GM12878 (cell line): ENCODE measurements at regions of chr1 and their contacts with region 1.

Region 1: GRCh38 chr1:32005522-32005921 is 8.1 kb upstream of the KHDRBS1 start:
- DNase-seq: peak; percentile 43
- ATAC-seq: peak; percentile 88
- H3K4me3 ChIP-seq: no peak overlapping the region
- H3K27ac ChIP-seq: no peak overlapping the region
- H3K4me1 ChIP-seq: peaks cover 25% of the 10 kb centered on the region
- H3K27me3 ChIP-seq: no peaks in the 10 kb centered on the region
- CTCF ChIP-seq: no peak
- EP300 ChIP-seq: no peak
- POLR2A ChIP-seq: no peak
- RAD21 ChIP-seq: no peak

Region 2: GRCh38 chr1:31723828-31724359 is 281.6 kb before region 1 on chr1:
- CTCF ChIA-PET with region 1: no interaction called
- POLR2A ChIA-PET with region 1: no interaction called
- RAD21 ChIA-PET with region 1: no interaction called
- SMC1A ChIA-PET with region 1: no interaction called
- in situ Hi-C with region 1: no loop called
- intact Hi-C with region 1: no loop called
- DNase-seq: no peak
- ATAC-seq: 0 out of 3 replicates have a peak, but pooled peaks have one; percentile 28
- H3K4me3 ChIP-seq: no peak overlapping the region
- H3K27ac ChIP-seq: no peak overlapping the region
- H3K4me1 ChIP-seq: no peaks in the 10 kb centered on the region
- H3K27me3 ChIP-seq: peaks cover 0 to 3% of the 10 kb centered on the region in 2 experiments; a peak in 2 of 4 replicates
- CTCF ChIP-seq: no peak
- EP300 ChIP-seq: no peak
- POLR2A ChIP-seq: no peak
- RAD21 ChIP-seq: no peak

Region 3: DNA sequence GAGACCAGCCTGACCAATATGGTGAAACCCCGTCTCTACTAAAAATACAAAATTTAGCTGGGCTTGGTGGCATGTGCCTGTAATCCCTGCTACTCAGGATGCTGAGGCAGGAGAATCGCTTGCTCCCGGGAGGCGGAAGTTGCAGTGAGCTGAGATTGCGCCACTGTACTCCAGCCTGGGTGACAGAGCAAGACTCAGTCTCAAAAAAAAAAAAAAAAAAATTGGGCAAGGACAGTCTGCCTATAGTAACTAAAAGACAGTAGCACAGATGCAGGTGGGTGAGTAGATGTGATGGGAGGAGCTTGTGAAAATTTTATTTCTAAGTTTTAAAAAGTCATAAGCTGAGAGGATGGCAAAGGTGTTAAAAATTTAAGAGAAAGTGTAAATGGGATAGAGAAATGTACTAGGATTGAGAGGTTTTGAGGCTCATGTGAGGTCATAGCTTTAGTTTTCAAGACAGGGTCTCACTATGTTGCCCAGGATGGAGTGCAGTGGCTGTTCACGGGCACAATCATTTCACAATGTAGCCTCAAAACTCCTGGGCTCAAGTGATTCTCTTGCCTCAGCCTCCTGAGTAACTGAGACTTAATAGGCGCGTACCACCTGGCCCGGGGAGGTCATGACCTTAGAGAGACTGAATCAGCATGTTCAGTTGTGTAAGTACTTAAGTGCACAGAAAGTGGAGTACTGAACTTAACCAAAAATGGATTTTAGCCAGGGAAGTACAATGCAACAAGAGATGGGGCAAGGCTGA is 101.0 kb before region 1 on chr1:
- CTCF ChIA-PET with region 1: no interaction called
- POLR2A ChIA-PET with region 1: no interaction called
- RAD21 ChIA-PET with region 1: no interaction called
- SMC1A ChIA-PET with region 1: no interaction called
- in situ Hi-C with region 1: no loop called
- intact Hi-C with region 1: no loop called
- DNase-seq: no peak
- ATAC-seq: peak; percentile 16; the same call in 2 of the 3 replicates
- H3K4me3 ChIP-seq: no peak overlapping the region
- H3K27ac ChIP-seq: no peak overlapping the region
- H3K4me1 ChIP-seq: peaks cover 13% of the 10 kb centered on the region
- H3K27me3 ChIP-seq: no peaks in the 10 kb centered on the region
- CTCF ChIP-seq: no peak
- EP300 ChIP-seq: no peak
- POLR2A ChIP-seq: no peak
- RAD21 ChIP-seq: no peak

Region 4: DNA sequence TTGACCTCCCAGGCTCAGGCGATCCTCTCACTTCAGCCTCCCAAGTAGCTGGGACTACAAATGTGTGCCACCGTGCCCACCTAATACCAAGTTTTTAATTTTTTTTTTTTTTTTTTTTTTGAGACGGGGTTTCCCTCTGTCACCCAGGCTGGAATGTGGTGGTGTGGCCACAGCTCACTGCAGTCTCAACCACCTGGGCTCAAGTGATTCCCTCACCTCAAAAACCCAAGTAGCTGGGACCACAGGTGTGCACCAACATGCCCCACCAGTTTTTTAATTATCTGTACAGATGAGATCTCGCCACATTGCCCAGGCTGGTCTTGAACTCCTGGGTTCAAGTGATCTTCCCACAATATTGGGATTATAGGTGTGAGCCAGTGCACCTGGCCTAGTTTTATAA is 90.1 kb before region 1 on chr1:
- CTCF ChIA-PET with region 1: no interaction called
- POLR2A ChIA-PET with region 1: no interaction called
- RAD21 ChIA-PET with region 1: no interaction called
- SMC1A ChIA-PET with region 1: no interaction called
- in situ Hi-C with region 1: no loop called
- intact Hi-C with region 1: no loop called
- DNase-seq: no peak
- ATAC-seq: no peak
- H3K4me3 ChIP-seq: no peak overlapping the region
- H3K27ac ChIP-seq: no peak overlapping the region
- H3K4me1 ChIP-seq: peaks cover 29% of the 10 kb centered on the region
- H3K27me3 ChIP-seq: no peaks in the 10 kb centered on the region
- CTCF ChIP-seq: no peak
- EP300 ChIP-seq: no peak
- POLR2A ChIP-seq: no peak
- RAD21 ChIP-seq: no peak

Region 5: DNA sequence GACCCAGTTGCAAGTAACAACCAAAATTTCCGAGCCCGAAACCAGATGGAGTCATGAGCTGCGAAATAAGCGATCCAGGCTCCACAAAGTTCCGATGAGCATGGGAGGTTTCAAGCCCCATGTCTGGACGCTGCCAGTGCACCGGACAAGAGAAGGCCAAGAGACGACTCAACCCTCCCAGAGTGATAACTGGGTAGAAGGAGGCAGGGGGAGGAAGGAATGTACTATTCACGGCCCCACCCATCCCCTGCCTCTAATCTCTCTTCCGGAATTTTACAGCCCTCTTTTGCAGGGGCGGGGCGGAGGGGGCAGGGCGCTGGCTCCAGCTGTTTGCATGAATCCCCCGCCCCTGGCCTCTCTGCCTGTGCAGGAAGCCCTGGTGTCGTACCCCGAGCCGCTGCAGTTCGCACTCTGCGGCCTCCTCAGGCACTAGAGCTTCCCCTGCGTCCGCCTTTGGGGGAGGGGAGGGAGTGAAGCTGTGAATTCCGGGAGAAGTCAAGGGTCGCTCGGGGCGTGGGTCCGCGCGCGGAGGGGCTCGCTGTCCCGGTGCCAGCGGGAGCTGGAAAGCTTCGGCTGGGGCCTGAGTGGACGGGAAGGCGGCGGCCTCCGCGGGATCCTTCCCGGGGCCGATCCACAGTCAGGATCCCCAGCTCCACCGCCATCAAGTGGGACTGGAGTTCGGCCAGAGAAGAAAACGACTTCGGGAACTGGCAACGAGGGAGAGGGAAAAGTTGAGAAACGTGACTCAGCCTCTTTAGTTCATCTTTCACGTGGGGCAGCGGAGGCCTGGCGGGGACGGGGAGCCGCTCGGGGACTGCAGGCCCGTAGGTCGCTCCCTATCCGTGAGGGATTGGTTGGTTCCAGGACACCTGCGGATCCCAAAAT is 61.1 kb before region 1 on chr1:
- CTCF ChIA-PET with region 1: interaction called, 11 read pairs
- POLR2A ChIA-PET with region 1: interaction called, 3 read pairs
- RAD21 ChIA-PET with region 1: interaction called, 5 read pairs
- SMC1A ChIA-PET with region 1: interaction called, 4 read pairs
- in situ Hi-C with region 1: no loop called
- intact Hi-C with region 1: loop called (anchors 5 kb)
- DNase-seq: peak; percentile 75
- ATAC-seq: peak; percentile 85
- H3K4me3 ChIP-seq: peak overlapping the region; percentile 78
- H3K27ac ChIP-seq: peak overlapping the region; percentile 94
- H3K4me1 ChIP-seq: peaks cover 38% of the 10 kb centered on the region
- H3K27me3 ChIP-seq: no peaks in the 10 kb centered on the region
- CTCF ChIP-seq: no peak
- EP300 ChIP-seq: 0 out of 4 replicates have a peak, but pooled peaks of 1 of the 2 experiments have one; percentile 25
- POLR2A ChIP-seq: peak; percentile 99
- RAD21 ChIP-seq: no peak; the same call in 1 of the 2 replicates

Region 6: GRCh38 chr1:31970873-31971272 is 34.6 kb before region 1 on chr1:
- CTCF ChIA-PET with region 1: interaction called, 76 read pairs
- POLR2A ChIA-PET with region 1: interaction called, 7 read pairs
- RAD21 ChIA-PET with region 1: interaction called, 31 read pairs
- SMC1A ChIA-PET with region 1: interaction called, 11 read pairs
- in situ Hi-C with region 1: no loop called
- intact Hi-C with region 1: no loop called
- DNase-seq: no peak
- ATAC-seq: no peak
- H3K4me3 ChIP-seq: no peak overlapping the region
- H3K27ac ChIP-seq: no peak overlapping the region
- H3K4me1 ChIP-seq: no peaks in the 10 kb centered on the region
- H3K27me3 ChIP-seq: no peaks in the 10 kb centered on the region
- CTCF ChIP-seq: no peak
- EP300 ChIP-seq: no peak
- POLR2A ChIP-seq: no peak
- RAD21 ChIP-seq: no peak

Region 7: GRCh38 chr1:31977385-31978131 is 28.0 kb before region 1 on chr1:
- CTCF ChIA-PET with region 1: interaction called, 76 read pairs
- POLR2A ChIA-PET with region 1: interaction called, 7 read pairs
- RAD21 ChIA-PET with region 1: interaction called, 19 read pairs
- SMC1A ChIA-PET with region 1: interaction called, 25 read pairs
- in situ Hi-C with region 1: no loop called
- intact Hi-C with region 1: no loop called
- DNase-seq: no peak
- ATAC-seq: peak; percentile 46
- H3K4me3 ChIP-seq: no peak overlapping the region
- H3K27ac ChIP-seq: no peak overlapping the region
- H3K4me1 ChIP-seq: peaks cover 17% of the 10 kb centered on the region
- H3K27me3 ChIP-seq: no peaks in the 10 kb centered on the region
- CTCF ChIP-seq: peak; percentile 29 to 54 (median 32); a peak in 4 of 6 replicates
- EP300 ChIP-seq: no peak
- POLR2A ChIP-seq: no peak
- RAD21 ChIP-seq: peak; percentile 42

Region 8: DNA sequence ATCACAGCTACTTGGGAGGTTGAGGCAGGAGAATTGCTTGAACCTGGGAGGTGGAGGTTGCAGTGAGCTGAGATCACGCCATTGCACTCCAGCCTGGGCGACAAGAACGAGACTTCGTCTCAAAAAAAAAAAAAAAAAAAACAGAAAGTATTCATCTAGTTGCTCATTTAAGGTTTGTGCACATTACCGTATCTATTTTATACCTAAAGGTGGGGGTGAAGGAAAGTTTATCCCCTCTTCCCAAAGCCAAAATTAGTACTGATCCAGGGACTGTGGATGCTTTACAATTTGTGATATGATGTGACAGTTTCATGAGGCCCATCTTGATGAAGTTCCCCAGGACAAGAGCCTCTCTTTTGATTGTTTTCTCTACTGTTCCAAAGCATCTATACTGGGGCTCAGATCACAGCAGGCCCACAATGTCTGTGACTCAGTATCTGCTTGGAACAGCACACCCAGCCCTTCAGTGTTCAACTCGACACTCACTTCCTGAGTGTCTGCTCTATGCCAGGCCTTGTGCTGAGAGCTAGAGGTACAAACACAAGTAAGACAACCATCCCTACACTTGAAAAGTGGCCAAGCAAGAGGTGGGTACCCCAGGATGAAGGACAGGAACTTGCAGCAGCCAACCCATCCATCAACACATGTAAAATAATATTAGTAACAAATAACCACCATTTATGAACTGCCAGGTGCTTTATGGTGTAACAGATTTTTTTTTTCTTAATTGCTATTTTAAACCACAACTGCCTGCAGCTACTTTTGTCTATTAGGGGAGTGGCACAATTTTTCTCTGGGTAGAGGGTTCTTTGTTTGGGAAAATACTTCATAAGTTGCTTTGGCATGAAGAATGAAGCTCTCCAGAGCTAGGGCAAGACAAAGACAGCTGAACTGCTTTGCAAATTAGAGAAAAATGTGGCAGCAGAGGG is 20.8 kb before region 1 on chr1:
- CTCF ChIA-PET with region 1: interaction called, 76 read pairs
- POLR2A ChIA-PET with region 1: interaction called, 10 read pairs
- RAD21 ChIA-PET with region 1: interaction called, 8 read pairs
- SMC1A ChIA-PET with region 1: interaction called, 12 read pairs
- in situ Hi-C with region 1: no loop called
- intact Hi-C with region 1: no loop called
- DNase-seq: no peak
- ATAC-seq: peak; percentile 40
- H3K4me3 ChIP-seq: peak overlapping the region; percentile 48; the same call in 1 of the 2 replicates
- H3K27ac ChIP-seq: peak overlapping the region; percentile 77
- H3K4me1 ChIP-seq: peaks cover 32% of the 10 kb centered on the region
- H3K27me3 ChIP-seq: no peaks in the 10 kb centered on the region
- CTCF ChIP-seq: no peak
- EP300 ChIP-seq: no peak
- POLR2A ChIP-seq: peak; percentile 60
- RAD21 ChIP-seq: no peak

Region 9: DNA sequence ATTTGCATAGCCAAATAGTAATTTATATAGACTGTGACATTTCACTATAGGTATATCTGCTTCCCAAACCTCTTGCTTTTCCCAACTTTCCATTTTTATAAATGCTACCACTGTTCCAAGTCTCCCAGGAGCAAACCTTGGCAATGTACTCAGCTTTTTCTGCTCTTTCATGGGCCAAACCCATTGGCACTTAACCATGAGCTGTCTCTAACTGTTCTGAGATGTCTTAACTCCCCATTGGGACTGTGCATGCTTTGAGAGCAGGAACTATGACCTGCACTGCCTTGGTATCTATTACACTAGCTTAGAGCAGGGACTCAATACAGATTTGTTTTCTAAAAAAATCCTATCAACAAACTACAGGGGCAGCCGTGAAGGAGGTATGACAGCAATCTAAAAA is 14.3 kb before region 1 on chr1:
- CTCF ChIA-PET with region 1: interaction called, 34 read pairs
- POLR2A ChIA-PET with region 1: interaction called, 10 read pairs
- RAD21 ChIA-PET with region 1: interaction called, 5 read pairs
- SMC1A ChIA-PET with region 1: interaction called, 8 read pairs
- in situ Hi-C with region 1: no loop called
- intact Hi-C with region 1: no loop called
- DNase-seq: no peak
- ATAC-seq: no peak
- H3K4me3 ChIP-seq: no peak overlapping the region
- H3K27ac ChIP-seq: no peak overlapping the region
- H3K4me1 ChIP-seq: no peaks in the 10 kb centered on the region
- H3K27me3 ChIP-seq: no peaks in the 10 kb centered on the region
- CTCF ChIP-seq: no peak
- EP300 ChIP-seq: no peak
- POLR2A ChIP-seq: no peak
- RAD21 ChIP-seq: no peak

Region 10: GRCh38 chr1:32052887-32053286 is 47.4 kb after region 1 on chr1:
- CTCF ChIA-PET with region 1: interaction called, 4 read pairs
- POLR2A ChIA-PET with region 1: interaction called, 10 read pairs
- RAD21 ChIA-PET with region 1: no interaction called
- SMC1A ChIA-PET with region 1: interaction called, 5 read pairs
- in situ Hi-C with region 1: no loop called
- intact Hi-C with region 1: no loop called
- DNase-seq: no peak
- ATAC-seq: no peak
- H3K4me3 ChIP-seq: no peak overlapping the region
- H3K27ac ChIP-seq: no peak overlapping the region
- H3K4me1 ChIP-seq: no peaks in the 10 kb centered on the region
- H3K27me3 ChIP-seq: no peaks in the 10 kb centered on the region
- CTCF ChIP-seq: no peak
- EP300 ChIP-seq: no peak
- POLR2A ChIP-seq: no peak
- RAD21 ChIP-seq: no peak

Region 11: DNA sequence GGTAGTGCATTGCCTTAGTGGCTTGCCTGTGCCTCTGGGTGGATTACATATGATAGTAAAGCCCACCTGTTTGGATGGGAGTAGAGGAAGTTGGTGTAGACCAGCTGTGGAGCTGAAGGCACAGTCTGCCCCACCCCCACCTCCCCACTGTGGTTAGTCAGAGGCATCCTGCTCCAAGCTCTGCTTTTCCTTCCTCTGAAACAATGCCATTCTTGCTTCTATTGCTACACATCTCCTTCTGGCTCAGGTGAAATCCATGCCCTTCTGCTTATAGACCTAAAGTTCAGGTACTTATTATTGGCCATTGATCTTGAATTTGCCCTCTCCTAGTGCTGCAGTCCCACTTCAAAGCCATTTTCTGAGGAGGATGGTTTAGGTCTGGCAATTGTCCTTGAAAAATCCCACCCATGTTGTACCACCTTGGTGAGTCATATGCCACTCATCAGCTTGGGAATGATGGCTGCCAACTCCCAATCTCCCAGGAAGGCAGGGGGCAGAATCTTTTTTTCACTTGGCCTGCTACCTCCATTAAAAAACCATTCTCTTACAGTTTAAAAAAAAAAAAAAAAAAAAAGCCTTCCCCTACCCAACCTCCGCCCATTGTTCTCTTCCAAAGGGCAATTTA is 167.2 kb after region 1 on chr1:
- CTCF ChIA-PET with region 1: no interaction called
- POLR2A ChIA-PET with region 1: no interaction called
- RAD21 ChIA-PET with region 1: no interaction called
- SMC1A ChIA-PET with region 1: no interaction called
- in situ Hi-C with region 1: no loop called
- intact Hi-C with region 1: no loop called
- DNase-seq: no peak
- ATAC-seq: no peak
- H3K4me3 ChIP-seq: no peak overlapping the region
- H3K27ac ChIP-seq: no peak overlapping the region
- H3K4me1 ChIP-seq: no peaks in the 10 kb centered on the region
- H3K27me3 ChIP-seq: no peaks in the 10 kb centered on the region
- CTCF ChIP-seq: no peak
- EP300 ChIP-seq: no peak
- POLR2A ChIP-seq: no peak
- RAD21 ChIP-seq: no peak